ENCODE measurements at regions of chr16 and their contacts with region 1.

Region 1: DNA sequence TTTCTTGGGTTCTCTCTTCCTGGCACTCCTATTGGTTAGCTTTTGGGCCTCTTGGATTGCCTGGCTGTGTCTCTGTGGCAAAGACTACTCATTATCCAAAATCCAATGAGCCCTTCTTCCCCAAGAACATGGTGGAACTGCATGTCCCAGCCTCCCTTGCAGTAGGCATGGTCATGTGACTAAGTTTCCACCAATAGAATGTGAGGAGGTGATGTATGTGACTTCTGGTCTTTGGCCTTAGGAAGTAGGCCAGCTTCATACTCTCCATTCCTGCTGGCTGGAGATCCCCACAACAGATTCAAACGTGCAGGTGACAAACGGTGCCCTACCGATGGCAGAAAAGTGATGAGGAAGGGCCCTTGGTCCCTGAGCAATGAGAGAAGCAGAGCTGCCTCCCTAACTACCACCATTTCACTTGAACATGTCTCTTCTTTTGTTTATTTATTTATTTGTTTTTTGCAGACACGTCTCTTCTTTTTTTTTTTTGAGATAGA is 17.3 kb upstream of the SPN start:
- DNase-seq: peak; percentile 35
- H3K4me3 Mint-ChIP-seq: no peak overlapping the region
- H3K27ac Mint-ChIP-seq: peak overlapping the region; percentile 75
- H3K4me1 Mint-ChIP-seq: peaks cover 32% of the 10 kb centered on the region
- H3K27me3 Mint-ChIP-seq: no peaks in the 10 kb centered on the region

Region 2: DNA sequence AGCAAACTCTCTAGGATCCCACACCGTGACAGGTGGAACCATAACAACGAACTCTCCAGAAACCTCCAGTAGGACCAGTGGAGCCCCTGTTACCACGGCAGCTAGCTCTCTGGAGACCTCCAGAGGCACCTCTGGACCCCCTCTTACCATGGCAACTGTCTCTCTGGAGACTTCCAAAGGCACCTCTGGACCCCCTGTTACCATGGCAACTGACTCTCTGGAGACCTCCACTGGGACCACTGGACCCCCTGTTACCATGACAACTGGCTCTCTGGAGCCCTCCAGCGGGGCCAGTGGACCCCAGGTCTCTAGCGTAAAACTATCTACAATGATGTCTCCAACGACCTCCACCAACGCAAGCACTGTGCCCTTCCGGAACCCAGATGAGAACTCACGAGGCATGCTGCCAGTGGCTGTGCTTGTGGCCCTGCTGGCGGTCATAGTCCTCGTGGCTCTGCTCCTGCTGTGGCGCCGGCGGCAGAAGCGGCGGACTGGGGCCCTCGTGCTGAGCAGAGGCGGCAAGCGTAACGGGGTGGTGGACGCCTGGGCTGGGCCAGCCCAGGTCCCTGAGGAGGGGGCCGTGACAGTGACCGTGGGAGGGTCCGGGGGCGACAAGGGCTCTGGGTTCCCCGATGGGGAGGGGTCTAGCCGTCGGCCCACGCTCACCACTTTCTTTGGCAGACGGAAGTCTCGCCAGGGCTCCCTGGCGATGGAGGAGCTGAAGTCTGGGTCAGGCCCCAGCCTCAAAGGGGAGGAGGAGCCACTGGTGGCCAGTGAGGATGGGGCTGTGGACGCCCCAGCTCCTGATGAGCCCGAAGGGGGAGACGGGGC is 18.6 kb after region 1 on chr16:
- CTCF ChIA-PET with region 1: interaction called, 4 read pairs
- intact Hi-C with region 1: loop called (anchors 1 kb)
- DNase-seq: peak; percentile 63
- H3K4me3 Mint-ChIP-seq: peak overlapping the region; percentile 96
- H3K27ac Mint-ChIP-seq: peak overlapping the region; percentile 98
- H3K4me1 Mint-ChIP-seq: peaks cover 54% of the 10 kb centered on the region
- H3K27me3 Mint-ChIP-seq: no peaks in the 10 kb centered on the region

Region 3: DNA sequence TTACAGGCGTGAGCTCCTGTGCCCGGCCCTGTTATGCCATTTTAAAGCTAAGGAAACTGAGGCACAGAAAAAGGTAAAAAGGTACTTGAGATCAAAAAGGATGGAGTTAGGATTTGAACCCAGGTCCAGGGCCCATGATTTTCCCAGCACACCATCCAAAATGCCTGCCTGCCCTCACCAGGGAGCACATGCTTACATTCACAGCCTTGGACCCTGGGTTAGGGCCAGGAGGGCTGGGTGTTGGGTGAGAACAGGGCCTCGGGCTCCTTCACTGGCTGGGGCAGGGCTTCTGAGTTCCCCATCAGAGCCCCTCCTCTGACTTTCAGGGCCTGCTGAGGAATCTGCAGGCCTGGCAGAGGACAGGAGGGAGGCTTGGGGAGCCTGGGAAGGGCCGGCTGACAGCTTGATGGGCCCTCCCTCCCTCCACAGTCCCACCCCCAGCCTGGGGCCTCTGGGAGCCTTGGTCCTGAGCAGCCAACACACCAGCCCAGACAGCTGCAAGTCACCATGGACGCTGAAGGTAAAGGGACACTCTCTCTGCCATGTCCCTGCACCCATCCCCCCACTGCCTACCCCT is 33.0 kb after region 1 on chr16 and contains the start of gene QPRT:
- CTCF ChIA-PET with region 1: interaction called, 3 read pairs
- intact Hi-C with region 1: loop called (anchors 5 kb)
- DNase-seq: no peak
- H3K4me3 Mint-ChIP-seq: peak within 1 kb of the TSS; percentile 59
- H3K27ac Mint-ChIP-seq: peak within 1 kb of the TSS; percentile 57
- H3K4me1 Mint-ChIP-seq: peaks cover 20% of the 10 kb centered on the region
- H3K27me3 Mint-ChIP-seq: no peaks in the 10 kb centered on the region
- total RNA-seq, gene QPRT: 8.3 to 9.2 TPM

Region 4: GRCh38 chr16:29710227-29711219 is 64.8 kb after region 1 on chr16:
- CTCF ChIA-PET with region 1: no interaction called
- intact Hi-C with region 1: loop called (anchors 1 kb)
- DNase-seq: peak; percentile 64
- H3K4me3 Mint-ChIP-seq: no peak overlapping the region
- H3K27ac Mint-ChIP-seq: peak overlapping the region; percentile 20
- H3K4me1 Mint-ChIP-seq: peaks cover 15% of the 10 kb centered on the region
- H3K27me3 Mint-ChIP-seq: no peaks in the 10 kb centered on the region

Region 5: DNA sequence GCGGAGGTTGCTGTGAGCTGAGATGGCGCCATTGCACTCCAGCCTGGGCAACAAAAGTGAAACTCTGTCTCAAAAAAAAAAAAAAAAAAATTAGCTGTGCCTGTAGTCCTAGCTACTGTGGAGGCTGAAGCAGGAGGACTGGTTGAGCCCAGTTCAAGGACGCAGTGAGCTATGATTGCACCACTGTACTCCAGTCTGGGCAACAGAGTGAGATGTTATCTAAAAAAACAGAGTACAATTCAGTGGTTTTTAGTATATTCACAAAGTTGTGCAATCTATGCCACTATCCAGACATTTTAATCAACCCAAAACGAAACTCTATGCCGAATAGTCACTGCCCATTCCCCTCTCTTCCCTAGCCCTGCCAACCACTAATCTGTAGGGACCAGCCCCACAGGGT is 75.0 kb after region 1 on chr16:
- CTCF ChIA-PET with region 1: interaction called, 3 read pairs
- intact Hi-C with region 1: loop called (anchors 2 kb)
- DNase-seq: no peak
- H3K4me3 Mint-ChIP-seq: no peak overlapping the region
- H3K27ac Mint-ChIP-seq: no peak overlapping the region
- H3K4me1 Mint-ChIP-seq: peaks cover 22% of the 10 kb centered on the region
- H3K27me3 Mint-ChIP-seq: no peaks in the 10 kb centered on the region